ENCODE measurements at regions of chr7 and their contacts with region 1.

Region 1: DNA sequence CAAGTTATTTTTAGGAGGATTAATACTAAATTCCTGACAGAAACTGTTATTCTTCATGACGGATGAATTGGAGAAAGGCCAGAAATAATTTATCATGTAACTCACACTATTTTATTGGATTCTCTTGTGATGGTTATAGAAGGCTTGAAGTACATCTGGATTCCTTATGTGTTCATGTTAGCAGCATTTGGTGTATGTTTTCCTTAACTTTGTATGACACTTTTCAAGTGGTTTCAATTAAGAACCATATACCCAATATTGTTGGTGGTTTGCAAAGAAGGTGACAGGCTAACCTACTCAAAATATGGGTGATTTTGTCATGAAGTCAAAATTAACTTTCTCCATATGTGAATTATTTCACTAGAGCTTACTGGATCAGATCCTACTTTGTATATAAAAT is 532.2 kb upstream of the CNTNAP2 start:
- DNase-seq: no peak
- ATAC-seq: no peak
- H3K4me3 Mint-ChIP-seq: no peak overlapping the region
- H3K27ac Mint-ChIP-seq: no peak overlapping the region
- H3K4me1 Mint-ChIP-seq: no peaks in the 10 kb centered on the region
- H3K27me3 Mint-ChIP-seq: no peaks in the 10 kb centered on the region
- CTCF ChIP-seq: no peak

Region 2: DNA sequence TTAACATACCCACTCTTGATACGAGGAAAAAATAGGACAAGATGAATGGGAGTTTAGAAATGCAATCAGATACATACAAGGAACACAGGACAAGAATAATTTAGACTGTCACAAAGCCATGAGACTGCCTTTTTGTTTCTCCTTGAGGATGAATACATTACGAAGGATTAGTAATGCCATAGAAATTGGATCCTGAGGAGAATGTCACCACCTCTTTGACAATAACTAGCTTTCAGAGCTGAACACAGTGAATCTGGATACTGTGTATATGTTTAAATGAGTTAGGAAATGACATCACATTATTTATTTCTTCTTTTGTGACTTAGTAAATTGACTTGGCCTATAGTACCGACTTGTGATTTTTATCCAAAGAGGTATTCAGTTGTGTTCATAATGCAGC is 64.1 kb before region 1 on chr7:
- CTCF ChIA-PET with region 1: no interaction called
- POLR2A ChIA-PET with region 1: no interaction called
- intact Hi-C with region 1: loop called (anchors 10 kb)
- DNase-seq: no peak
- ATAC-seq: no peak
- H3K4me3 Mint-ChIP-seq: no peak overlapping the region
- H3K27ac Mint-ChIP-seq: no peak overlapping the region
- H3K4me1 Mint-ChIP-seq: no peaks in the 10 kb centered on the region
- H3K27me3 Mint-ChIP-seq: no peaks in the 10 kb centered on the region
- CTCF ChIP-seq: no peak

Measured in activated B cell treated with CpG ODN at 0.5 μM for 24 hours (primary cell).